ENCODE measurements at regions of chr17 and their contacts with region 1.

Region 1: GRCh38 chr17:51640108-51640622 is 379.8 kb downstream of the UTP18 start:
- DNase-seq: peak; percentile 69
- H3K4me3 Mint-ChIP-seq: no peak overlapping the region
- H3K27ac Mint-ChIP-seq: no peak overlapping the region
- H3K4me1 Mint-ChIP-seq: peaks cover 22% of the 10 kb centered on the region
- H3K27me3 Mint-ChIP-seq: peaks cover 10% of the 10 kb centered on the region
- CTCF ChIP-seq: peak; percentile 41

Region 2: DNA sequence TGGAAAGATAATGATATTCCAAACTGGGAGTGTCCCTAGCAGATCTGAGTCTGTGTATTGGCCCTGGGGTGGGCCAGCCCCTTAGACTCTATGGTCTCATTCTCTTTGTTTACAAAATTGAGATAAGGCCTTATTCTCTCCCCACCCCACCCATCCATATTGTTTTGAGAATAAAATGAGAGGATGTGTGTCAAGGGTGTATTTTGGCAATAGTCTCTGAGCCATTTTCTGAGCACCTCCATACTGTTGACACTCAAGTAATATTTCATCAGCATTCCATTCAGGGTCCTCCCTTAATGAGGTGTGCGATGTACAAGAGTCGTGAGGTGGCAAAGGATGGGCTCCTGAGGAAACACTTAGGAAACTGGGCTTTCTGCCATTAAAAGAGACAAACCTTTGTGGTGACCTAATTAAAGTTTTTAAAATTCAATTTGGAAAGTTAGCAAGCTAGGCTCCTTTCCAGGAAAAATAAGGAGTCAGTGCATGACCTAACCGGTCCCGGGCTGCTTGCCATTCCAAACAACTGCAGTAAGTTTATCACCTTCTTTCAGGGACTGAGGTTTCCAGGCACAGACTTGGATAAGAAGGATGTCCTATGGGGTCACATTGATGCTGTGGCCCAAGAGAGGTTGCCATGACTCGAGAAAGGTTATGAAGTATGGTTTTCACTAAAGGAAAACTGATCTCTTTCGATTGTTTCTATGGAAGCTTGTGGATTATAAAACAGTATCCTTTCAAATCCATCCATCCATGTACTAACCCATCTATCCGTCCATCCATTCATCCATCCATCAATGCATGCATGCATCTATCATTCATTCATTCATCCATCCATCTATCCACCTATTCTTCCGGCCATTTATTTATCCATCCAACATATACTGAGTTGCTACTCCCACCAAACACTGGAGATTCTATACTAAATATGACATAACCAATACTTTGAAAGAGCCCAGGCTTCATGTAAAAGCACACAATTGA is 63.5 kb after region 1 on chr17:
- CTCF ChIA-PET with region 1: no interaction called
- POLR2A ChIA-PET with region 1: no interaction called
- intact Hi-C with region 1: loop called (anchors 1 kb)
- DNase-seq: peak; percentile 91
- H3K4me3 Mint-ChIP-seq: no peak overlapping the region
- H3K27ac Mint-ChIP-seq: peak overlapping the region; percentile 34
- H3K4me1 Mint-ChIP-seq: peaks cover 16% of the 10 kb centered on the region
- H3K27me3 Mint-ChIP-seq: peaks cover 11% of the 10 kb centered on the region
- CTCF ChIP-seq: no peak